Dorsolateral prefrontal cortex (tissue), 120 donors: ENCODE measurements at regions of chr3 and their contacts with region 1.

Region 1: GRCh38 chr3:108477511-108478147 is 32.8 kb downstream of the MYH15 start:
- DNase-seq: peak in 5 of 10 donors; percentile 17 to 50 (median 35)
- H3K4me3 ChIP-seq: peak overlapping the region in 23 of 59 donors; percentile 4 to 49 (median 20)
- H3K27ac ChIP-seq: no peak overlapping the region
- H3K27me3 ChIP-seq: no peaks in the 10 kb centered on the region
- CTCF ChIP-seq: peak; percentile 49 to 89 (median 76)

Region 2: DNA sequence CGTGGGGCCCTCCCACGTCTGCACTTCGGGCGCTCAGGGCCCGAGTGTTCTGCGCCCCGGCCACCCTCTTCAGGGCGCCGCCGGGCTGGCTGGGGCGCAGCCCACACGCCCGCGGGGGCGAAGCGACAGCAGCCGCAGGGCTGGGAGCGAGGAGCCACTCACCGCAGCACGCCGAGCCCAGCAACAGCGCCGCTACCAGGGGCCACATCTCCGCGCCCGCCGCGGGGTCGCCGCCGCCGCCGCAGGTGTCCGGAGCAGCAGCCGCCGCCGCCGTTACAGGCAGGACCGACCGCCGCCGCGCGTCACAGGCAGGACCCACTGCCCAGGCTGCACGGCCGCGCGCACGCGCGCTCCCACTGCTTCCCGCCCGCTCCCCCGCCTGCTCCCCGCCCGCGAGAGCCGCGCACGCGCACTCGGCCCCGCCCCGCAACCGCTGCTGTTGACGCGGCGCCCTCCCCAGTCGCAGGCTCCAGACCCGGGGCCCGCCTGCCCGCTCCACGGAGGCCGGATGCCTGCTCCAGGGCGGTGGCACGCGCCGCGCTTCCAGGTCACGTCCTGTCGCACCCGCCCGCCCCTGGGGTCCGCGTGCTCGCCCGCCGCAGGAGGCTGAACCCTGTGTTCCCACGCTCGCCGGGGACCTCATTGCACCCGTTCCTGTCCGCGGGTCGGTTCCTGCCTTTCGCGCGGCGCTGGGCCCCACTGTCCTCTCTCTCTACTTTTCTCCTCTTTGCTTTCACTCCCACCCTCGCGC is 386.8 kb before region 1 on chr3 and contains the start of gene CD47:
- intact Hi-C with region 1: loop called in 1 of 2 experiments (anchors 10 kb)
- DNase-seq: peak; percentile 85 to 97 (median 92)
- H3K4me3 ChIP-seq: peak within 1 kb of the TSS; percentile 72 to 99 (median 91)
- H3K27ac ChIP-seq: peak within 1 kb of the TSS; percentile 72 to 98 (median 93)
- H3K27me3 ChIP-seq: no peaks in the 10 kb centered on the region
- CTCF ChIP-seq: peak in 18 of 56 donors; percentile 0 to 46 (median 17)
- total RNA-seq, gene CD47: 66.8 to 236 (median 180) TPM

Region 3: GRCh38 chr3:108698461-108698860 is 220.8 kb after region 1 on chr3:
- intact Hi-C with region 1: no loop called
- DNase-seq: no peak
- H3K4me3 ChIP-seq: no peak overlapping the region
- H3K27ac ChIP-seq: peak overlapping the region in 1 of 59 donors; percentile 1
- H3K27me3 ChIP-seq: no peaks in the 10 kb centered on the region
- CTCF ChIP-seq: no peak